ENCODE measurements at regions of chr19 and their contacts with region 1.

Region 1: DNA sequence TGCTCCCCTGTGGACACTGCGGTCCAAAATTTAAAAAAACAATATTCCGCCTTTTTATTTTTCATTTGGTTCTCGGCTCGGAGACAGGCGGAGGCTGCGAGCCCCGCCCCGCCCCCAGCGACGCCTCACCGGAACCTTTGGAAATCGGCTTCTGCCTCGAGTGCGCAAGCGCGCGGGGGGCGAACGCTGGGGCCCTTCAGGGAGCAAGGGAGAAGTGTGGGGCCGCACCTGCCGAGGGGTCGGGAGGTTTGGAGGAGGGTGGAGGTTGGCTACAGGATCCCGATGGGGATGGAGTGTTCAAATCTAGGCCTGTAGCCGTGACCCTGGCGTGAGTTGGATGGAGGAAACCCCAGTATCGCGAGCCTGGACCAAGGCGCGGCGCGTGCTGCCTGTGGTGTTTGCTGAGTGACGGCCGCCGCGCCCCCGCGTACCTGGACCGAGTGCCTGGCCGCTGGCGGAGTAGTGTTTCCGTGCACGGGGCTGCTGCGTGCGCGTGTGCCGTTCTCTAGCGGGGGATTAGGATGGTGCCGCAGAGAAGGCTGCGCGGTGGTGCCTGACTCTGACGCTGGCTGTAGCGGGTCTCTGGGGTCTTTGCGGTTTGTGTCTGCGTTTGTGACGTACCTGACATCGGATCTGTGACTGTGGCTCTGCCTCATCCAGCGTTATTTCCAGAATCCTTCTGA is 565 bp upstream of the ZFP30 start:
- DNase-seq: peak; percentile 60 to 90 (median 86)
- ATAC-seq: peak; percentile 76
- H3K4me3 ChIP-seq: peak overlapping the region; percentile 74 to 81
- H3K4me3 Mint-ChIP-seq: peak overlapping the region; percentile 95
- H3K27ac ChIP-seq: peak overlapping the region; percentile 85 to 92
- H3K27ac Mint-ChIP-seq: peak overlapping the region; percentile 96
- H3K4me1 ChIP-seq: peaks cover 12% of the 10 kb centered on the region
- H3K4me1 Mint-ChIP-seq: peaks cover 38% of the 10 kb centered on the region
- H3K27me3 ChIP-seq: no peaks in the 10 kb centered on the region
- H3K27me3 Mint-ChIP-seq: no peaks in the 10 kb centered on the region
- CTCF ChIP-seq: no peak

Region 2: GRCh38 chr19:37309834-37310575 is 345.8 kb before region 1 on chr19:
- CTCF ChIA-PET with region 1: no interaction called
- POLR2A ChIA-PET with region 1: no interaction called
- intact Hi-C with region 1: loop called in 1 of 2 experiments (anchors 10 kb)
- DNase-seq: peak in 4 of 9 experiments; percentile 27 to 64 (median 45)
- ATAC-seq: no peak
- H3K4me3 ChIP-seq: no peak overlapping the region
- H3K4me3 Mint-ChIP-seq: no peak overlapping the region
- H3K27ac ChIP-seq: no peak overlapping the region
- H3K27ac Mint-ChIP-seq: no peak overlapping the region
- H3K4me1 ChIP-seq: no peaks in the 10 kb centered on the region
- H3K4me1 Mint-ChIP-seq: peaks cover 16% of the 10 kb centered on the region
- H3K27me3 ChIP-seq: no peaks in the 10 kb centered on the region
- H3K27me3 Mint-ChIP-seq: peaks cover 4% of the 10 kb centered on the region
- CTCF ChIP-seq: peak; percentile 53

Region 3: GRCh38 chr19:37506387-37507166 is 149.3 kb before region 1 on chr19 and contains the start of gene ZNF793:
- CTCF ChIA-PET with region 1: no interaction called
- POLR2A ChIA-PET with region 1: no interaction called
- intact Hi-C with region 1: loop called in 1 of 2 experiments (anchors 10 kb)
- DNase-seq: peak; percentile 53 to 89 (median 83)
- ATAC-seq: peak; percentile 87
- H3K4me3 ChIP-seq: peak within 1 kb of the TSS; percentile 82 to 86
- H3K4me3 Mint-ChIP-seq: no peak within 1 kb of the TSS
- H3K27ac ChIP-seq: peak within 1 kb of the TSS; percentile 94 to 97
- H3K27ac Mint-ChIP-seq: no peak within 1 kb of the TSS
- H3K4me1 ChIP-seq: peaks cover 16% of the 10 kb centered on the region
- H3K4me1 Mint-ChIP-seq: no peaks in the 10 kb centered on the region
- H3K27me3 ChIP-seq: no peaks in the 10 kb centered on the region
- H3K27me3 Mint-ChIP-seq: no peaks in the 10 kb centered on the region
- CTCF ChIP-seq: no peak
- total RNA-seq, gene ZNF793: 2.4 to 3.3 TPM

Region 4: DNA sequence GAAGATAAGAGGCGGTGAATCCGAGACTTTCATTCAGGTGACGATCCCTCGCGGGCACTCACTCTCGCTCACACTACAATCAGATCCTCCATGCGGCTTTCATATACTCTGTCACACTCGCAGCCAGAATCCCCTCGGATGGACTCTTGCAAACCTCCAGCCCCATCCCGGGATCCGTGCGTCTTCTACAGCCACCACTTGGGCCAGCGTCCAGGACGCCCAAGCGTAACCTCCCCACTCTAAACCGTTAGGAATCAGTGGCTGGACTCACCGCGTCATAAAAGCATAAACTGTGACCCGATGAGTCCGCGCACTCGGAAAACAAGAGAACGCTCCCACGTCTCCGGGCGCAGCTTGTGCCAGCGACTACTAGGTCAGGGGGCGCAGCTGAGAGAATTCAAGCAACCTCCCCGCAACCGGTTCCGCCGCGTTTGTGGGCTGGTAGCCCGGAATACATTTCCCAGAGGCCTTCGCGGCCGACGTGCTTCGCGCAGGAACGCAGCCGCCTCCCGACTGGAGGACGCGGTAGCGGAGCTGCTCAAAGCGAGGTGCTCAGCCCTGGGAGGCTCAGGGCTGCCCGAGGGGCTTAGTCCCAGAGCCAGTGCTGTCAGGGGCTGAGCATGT is 36.2 kb after region 1 on chr19:
- CTCF ChIA-PET with region 1: no interaction called
- POLR2A ChIA-PET with region 1: no interaction called
- intact Hi-C with region 1: loop called (anchors 2 to 5 kb)
- DNase-seq: peak; percentile 54 to 90 (median 80)
- ATAC-seq: peak; percentile 92
- H3K4me3 ChIP-seq: peak overlapping the region; percentile 58 to 73
- H3K4me3 Mint-ChIP-seq: peak overlapping the region; percentile 96
- H3K27ac ChIP-seq: peak overlapping the region; percentile 65 to 74
- H3K27ac Mint-ChIP-seq: peak overlapping the region; percentile 96
- H3K4me1 ChIP-seq: no peaks in the 10 kb centered on the region
- H3K4me1 Mint-ChIP-seq: peaks cover 13% of the 10 kb centered on the region
- H3K27me3 ChIP-seq: no peaks in the 10 kb centered on the region
- H3K27me3 Mint-ChIP-seq: no peaks in the 10 kb centered on the region
- CTCF ChIP-seq: no peak